Activated CD8-positive, alpha-beta T cell treated with anti-CD3 and anti-CD28 coated beads for 36 hours (primary cell): ENCODE measurements at regions of chr17 and their contacts with region 1.

Region 1: DNA sequence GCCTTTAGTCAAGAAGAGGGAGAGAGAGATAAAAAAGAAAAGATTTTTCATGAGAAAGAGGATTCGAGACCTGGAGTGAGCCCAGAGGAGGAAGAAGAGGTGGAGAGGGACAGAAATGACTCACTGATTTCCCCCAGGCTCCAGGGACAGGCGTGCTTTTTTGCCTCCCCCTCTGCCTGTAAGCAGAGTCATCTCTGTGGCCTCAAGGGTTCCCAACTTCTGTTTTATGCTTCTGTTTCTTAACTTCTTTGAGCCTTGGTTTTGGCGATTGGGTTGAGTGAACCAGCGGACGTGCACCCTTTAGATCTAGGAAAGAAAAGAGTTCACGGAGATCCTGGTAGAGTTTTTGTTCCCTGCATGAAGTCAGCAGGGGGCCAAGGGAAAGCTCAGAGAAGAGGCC is 147.9 kb upstream of the NOL11 start:
- DNase-seq: no peak
- ATAC-seq: no peak
- H3K4me3 Mint-ChIP-seq: no peak overlapping the region
- H3K27ac Mint-ChIP-seq: peak overlapping the region; percentile 17
- H3K4me1 Mint-ChIP-seq: peaks cover 29% of the 10 kb centered on the region
- H3K27me3 Mint-ChIP-seq: no peaks in the 10 kb centered on the region
- CTCF ChIP-seq: no peak

Region 2: GRCh38 chr17:67212689-67213417 is 357.0 kb before region 1 on chr17:
- CTCF ChIA-PET with region 1: no interaction called
- POLR2A ChIA-PET with region 1: no interaction called
- intact Hi-C with region 1: no loop called
- DNase-seq: no peak
- ATAC-seq: no peak
- H3K4me3 Mint-ChIP-seq: no peak overlapping the region
- H3K27ac Mint-ChIP-seq: peak overlapping the region; percentile 8
- H3K4me1 Mint-ChIP-seq: peaks cover 34% of the 10 kb centered on the region
- H3K27me3 Mint-ChIP-seq: no peaks in the 10 kb centered on the region
- CTCF ChIP-seq: no peak

Region 3: DNA sequence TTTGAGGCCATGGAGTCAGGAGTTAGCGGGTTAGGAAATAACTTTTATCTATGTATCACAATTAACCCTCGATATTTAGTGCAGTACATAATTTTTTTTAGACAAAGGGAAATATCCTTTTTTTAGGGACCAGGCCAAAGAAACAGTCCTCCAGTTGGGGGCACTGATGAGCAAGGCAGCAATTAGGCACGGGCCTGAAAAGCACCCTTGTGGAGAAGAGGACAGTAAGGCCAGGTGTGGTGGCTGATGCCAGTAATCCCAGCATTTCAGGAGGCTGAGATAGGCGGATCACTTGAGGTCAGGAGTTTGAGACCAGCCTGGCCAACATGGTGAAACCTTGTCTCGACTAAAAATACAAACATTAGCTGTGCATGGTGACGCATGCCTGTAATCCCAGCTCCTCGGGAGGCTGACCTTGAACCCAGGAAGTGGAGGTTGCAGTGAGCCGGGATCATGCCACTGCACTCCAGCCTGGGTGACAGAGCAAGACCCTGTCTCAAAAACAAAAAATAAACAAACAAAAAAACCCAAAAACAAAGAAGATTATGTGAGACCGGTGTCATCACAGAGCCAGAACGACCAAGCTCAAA is 10.4 kb before region 1 on chr17:
- CTCF ChIA-PET with region 1: interaction called, 12 read pairs
- POLR2A ChIA-PET with region 1: interaction called, 4 read pairs
- intact Hi-C with region 1: no loop called
- DNase-seq: peak; percentile 15
- ATAC-seq: no peak
- H3K4me3 Mint-ChIP-seq: no peak overlapping the region
- H3K27ac Mint-ChIP-seq: peak overlapping the region; percentile 1
- H3K4me1 Mint-ChIP-seq: peaks cover 7% of the 10 kb centered on the region
- H3K27me3 Mint-ChIP-seq: no peaks in the 10 kb centered on the region
- CTCF ChIP-seq: peak; percentile 20